ENCODE measurements at regions of chr5 and their contacts with region 1.

Region 1: GRCh38 chr5:173331956-173332479 is 3.8 kb upstream of the STC2 start:
- DNase-seq: peak; percentile 98
- H3K4me3 Mint-ChIP-seq: peak overlapping the region; percentile 43
- H3K27ac Mint-ChIP-seq: peak overlapping the region; percentile 84
- H3K4me1 Mint-ChIP-seq: peaks cover 22% of the 10 kb centered on the region
- H3K27me3 Mint-ChIP-seq: peaks cover 5% of the 10 kb centered on the region

Region 2: DNA sequence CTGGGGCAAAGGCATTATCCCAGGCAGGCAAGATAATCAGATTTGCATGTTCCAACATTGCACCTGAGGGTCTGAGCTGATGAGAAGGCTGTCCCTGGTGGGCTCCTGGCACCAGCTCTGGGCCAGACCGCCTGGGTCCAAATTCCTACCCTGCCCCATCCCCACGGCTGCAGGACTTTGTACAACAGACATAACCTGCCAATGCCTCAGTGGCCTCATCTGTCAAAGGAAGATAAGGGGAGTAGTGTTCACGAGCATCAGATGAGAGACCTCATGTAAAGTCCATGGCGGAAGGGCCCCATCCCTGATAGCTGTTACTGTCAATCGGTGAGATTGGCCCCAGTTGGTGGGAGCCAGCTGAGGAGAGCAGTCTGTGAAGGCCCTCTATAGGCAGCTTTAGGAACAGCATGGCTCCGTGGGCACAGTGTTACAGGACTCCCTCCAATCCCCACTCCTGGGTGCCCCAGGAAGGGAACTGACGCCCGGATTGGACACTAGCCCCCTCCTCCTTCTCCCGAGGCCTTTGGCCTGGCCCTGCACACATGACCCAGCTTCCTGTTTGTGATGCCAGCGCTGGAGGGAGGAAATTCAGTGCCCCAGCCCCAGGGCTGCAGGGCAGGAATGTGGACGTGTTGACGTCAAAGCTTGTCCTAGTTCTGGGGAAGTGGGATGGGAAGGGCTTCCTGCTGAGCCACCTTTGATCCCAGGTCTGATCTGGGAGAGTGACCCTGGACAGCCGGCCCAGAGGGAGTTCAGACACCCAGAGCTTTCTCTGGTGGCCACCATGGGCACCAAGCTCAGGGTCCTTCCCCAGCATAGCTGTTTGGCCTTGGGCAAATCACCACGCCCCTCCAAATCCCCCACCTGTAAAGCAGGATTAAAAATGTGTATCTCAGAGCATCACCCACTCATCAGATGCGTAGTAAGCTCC is 617.3 kb before region 1 on chr5:
- intact Hi-C with region 1: loop called (anchors 5 kb)
- DNase-seq: peak; percentile 90
- H3K4me3 Mint-ChIP-seq: no peak overlapping the region
- H3K27ac Mint-ChIP-seq: no peak overlapping the region
- H3K4me1 Mint-ChIP-seq: peaks cover 2% of the 10 kb centered on the region
- H3K27me3 Mint-ChIP-seq: peaks cover 10% of the 10 kb centered on the region

Region 3: DNA sequence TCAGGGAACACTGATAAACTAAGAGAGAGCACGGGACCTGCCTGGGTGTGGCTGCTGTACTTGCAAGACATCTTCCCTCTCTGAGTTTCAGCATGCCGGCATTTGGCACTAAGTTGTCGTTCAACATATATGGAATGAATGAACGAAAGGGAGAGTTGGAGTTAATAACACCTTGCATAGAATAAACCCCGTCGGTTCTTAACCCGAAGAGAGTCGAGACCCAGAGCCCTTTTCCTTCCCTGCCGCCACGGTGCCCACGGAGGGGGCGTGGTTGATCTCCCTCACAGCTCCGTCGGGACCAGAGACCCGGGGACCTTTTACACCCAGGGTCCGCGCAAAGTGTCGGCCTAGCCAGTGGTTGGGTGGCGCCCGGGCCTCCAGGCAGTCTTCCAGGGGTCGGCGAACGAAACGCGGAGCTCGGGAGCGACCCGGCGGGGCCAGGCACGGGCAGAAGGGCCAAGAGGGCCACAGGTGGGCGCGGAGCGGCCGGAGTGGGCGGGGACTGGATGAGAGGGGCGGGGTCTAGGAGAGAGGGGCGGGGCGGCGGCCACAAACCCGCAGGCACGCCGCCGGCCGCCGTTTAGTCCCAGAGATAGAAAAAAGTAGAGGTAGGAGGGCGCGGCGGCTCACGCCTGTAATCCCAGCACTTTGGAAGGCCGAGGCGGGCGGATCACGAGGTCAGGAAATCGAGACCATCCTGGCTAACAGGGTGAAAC is 373.5 kb before region 1 on chr5:
- intact Hi-C with region 1: loop called (anchors 2 kb)
- DNase-seq: peak; percentile 86
- H3K4me3 Mint-ChIP-seq: peak overlapping the region; percentile 92
- H3K27ac Mint-ChIP-seq: peak overlapping the region; percentile 90
- H3K4me1 Mint-ChIP-seq: peaks cover 30% of the 10 kb centered on the region
- H3K27me3 Mint-ChIP-seq: peaks cover 4% of the 10 kb centered on the region

Region 4: GRCh38 chr5:173144200-173145176 is 187.5 kb before region 1 on chr5 and contains the start of gene BNIP1:
- intact Hi-C with region 1: loop called (anchors 2 kb)
- DNase-seq: peak; percentile 99
- H3K4me3 Mint-ChIP-seq: peak within 1 kb of the TSS; percentile 97
- H3K27ac Mint-ChIP-seq: peak within 1 kb of the TSS; percentile 98
- H3K4me1 Mint-ChIP-seq: peaks cover 13% of the 10 kb centered on the region
- H3K27me3 Mint-ChIP-seq: no peaks in the 10 kb centered on the region
- total RNA-seq, gene BNIP1: 20.9 and 26.5 TPM in 2 replicates

Region 5: GRCh38 chr5:173293817-173294672 is 38.0 kb before region 1 on chr5:
- intact Hi-C with region 1: loop called (anchors 1 kb)
- DNase-seq: peak; percentile 93
- H3K4me3 Mint-ChIP-seq: peak overlapping the region; percentile 45
- H3K27ac Mint-ChIP-seq: no peak overlapping the region
- H3K4me1 Mint-ChIP-seq: peaks cover 16% of the 10 kb centered on the region
- H3K27me3 Mint-ChIP-seq: peaks cover 52% of the 10 kb centered on the region

Region 6: GRCh38 chr5:173304591-173304988 is 27.4 kb before region 1 on chr5:
- intact Hi-C with region 1: no loop called
- DNase-seq: no peak
- H3K4me3 Mint-ChIP-seq: no peak overlapping the region
- H3K27ac Mint-ChIP-seq: no peak overlapping the region
- H3K4me1 Mint-ChIP-seq: no peaks in the 10 kb centered on the region
- H3K27me3 Mint-ChIP-seq: peaks cover 46% of the 10 kb centered on the region

Region 7: DNA sequence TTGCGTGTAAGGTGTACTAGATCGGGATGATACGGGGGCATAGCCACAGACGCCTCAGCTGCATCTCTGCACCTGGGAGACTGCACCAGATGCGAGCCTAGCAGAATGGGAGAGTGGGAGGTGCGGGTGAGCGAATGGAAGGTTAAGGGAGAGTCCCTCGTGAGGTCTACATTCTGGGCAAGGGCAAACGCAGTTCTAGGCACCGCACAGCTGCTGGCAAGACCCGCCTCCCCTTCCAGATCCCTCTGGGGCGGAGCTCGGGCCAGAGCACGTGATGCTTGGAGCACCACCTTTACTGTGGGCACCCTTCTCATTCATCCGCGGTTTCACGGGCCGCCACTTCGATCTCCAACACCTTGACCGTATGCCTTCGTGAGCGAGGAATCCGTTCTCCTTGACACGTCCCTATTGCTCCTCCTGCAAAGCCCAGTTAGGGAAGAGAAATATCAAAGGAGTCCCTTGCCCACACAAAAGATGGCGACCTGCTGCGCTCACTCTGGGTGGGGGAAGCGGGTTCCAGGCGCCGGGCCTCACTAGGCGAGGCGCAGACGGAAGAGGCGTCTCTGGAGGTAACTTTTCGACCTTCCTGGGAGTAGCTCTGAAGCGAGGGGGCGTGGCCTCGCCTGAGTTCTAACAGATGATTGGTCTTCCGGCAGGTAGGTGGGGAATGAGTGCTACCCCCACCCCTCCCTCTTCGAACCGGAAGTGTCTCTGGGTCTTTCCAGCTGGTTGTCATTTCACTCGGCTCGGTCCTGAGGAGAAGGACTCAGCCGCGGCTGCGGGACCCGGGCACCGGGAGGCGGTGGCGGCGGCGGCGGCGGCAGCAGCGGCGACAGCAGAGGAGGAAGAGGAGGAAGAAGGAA is 555.8 kb after region 1 on chr5 and contains the start of gene CPEB4:
- intact Hi-C with region 1: loop called (anchors 5 kb)
- DNase-seq: peak; percentile 99
- H3K4me3 Mint-ChIP-seq: peak within 1 kb of the TSS; percentile 96
- H3K27ac Mint-ChIP-seq: peak within 1 kb of the TSS; percentile 99
- H3K4me1 Mint-ChIP-seq: peaks cover 60% of the 10 kb centered on the region
- H3K27me3 Mint-ChIP-seq: no peaks in the 10 kb centered on the region
- total RNA-seq, gene CPEB4: 7.6 and 8.8 TPM in 2 replicates